ENCODE measurements at regions of chr6 and their contacts with region 1.

Region 1: DNA sequence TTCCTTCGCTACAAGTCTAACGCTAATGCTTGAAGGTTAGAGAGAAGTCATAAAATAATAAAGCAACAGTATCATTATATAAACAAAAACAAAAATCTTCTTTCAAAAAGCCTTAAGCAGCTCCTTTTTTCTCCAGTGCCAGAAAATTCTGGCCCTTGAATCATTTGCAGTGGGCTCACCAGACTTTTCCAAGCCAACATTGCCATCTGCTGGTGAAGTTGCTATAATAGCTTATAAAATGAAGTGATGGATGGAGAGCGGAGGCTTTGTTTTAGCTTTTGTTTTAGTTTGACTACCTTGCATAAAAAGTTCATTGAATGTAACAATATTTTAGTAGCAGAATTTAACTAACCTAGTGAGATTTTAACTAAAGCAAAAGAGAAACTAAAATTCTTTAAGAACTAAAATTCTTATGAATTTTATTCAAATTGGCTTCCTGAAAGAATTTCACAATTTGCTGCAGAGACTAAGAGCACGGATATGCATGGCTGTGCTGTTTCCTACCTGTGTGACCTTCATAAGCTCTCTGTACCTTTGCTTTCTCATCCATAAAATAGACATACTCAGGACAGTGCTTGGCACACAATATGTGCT is 44.8 kb upstream of the SLC2A12 start:
- DNase-seq: peak; percentile 65
- ATAC-seq: peak; percentile 73
- H3K4me3 Mint-ChIP-seq: no peak overlapping the region
- H3K27ac Mint-ChIP-seq: no peak overlapping the region
- H3K4me1 Mint-ChIP-seq: peaks cover 6% of the 10 kb centered on the region; the same call in 1 of the 2 replicates
- H3K27me3 Mint-ChIP-seq: no peaks in the 10 kb centered on the region
- CTCF ChIP-seq: peak; percentile 52

Region 2: DNA sequence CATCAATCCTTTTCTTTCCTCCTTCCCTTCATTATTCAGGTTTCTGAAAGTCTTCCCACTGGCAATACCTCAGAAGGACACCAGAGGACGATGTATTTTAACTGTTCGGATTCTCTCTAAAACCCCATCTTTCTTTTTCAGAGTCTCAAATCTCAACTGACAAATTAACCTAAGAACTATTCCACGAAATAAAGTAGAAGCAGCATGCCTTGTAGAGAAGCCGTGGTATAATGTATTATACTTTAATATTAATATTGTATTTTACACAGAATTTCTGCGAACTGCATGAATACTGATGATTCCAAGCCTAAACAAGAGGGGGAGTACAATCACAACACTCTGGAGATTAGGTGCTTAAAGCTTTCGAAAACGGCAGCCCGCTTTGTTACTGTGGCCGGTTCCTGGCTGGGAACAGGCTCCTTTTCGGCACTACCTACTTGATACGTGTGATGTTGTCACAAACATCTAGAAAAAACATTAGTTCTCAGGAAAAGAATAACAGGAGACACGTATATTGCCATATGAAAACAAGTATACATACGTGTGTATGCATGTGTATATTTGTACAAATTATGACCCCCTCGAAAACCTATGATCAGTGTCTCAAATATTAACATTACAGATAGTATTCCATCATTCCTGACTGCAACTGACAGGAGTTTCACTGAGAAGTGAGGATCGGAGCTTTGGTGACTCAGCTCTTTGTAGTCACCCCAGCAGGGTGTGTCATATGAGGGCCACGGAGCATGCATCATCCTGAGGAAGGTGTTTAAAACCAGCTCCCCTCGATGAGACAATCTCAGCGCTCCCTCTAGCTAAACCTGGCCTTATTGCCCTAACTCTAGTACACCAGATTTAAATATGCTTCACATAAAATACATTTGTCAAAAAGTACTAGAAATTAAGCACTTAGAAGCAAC is 528.0 kb before region 1 on chr6:
- CTCF ChIA-PET with region 1: interaction called, 12 read pairs
- POLR2A ChIA-PET with region 1: no interaction called
- DNase-seq: peak; percentile 36
- ATAC-seq: peak; percentile 90
- H3K4me3 Mint-ChIP-seq: peak overlapping the region; percentile 77
- H3K27ac Mint-ChIP-seq: peak overlapping the region; percentile 92
- H3K4me1 Mint-ChIP-seq: peaks cover 7% of the 10 kb centered on the region
- H3K27me3 Mint-ChIP-seq: no peaks in the 10 kb centered on the region
- CTCF ChIP-seq: peak; percentile 78

Region 3: GRCh38 chr6:133916650-133917151 is 180.5 kb before region 1 on chr6:
- CTCF ChIA-PET with region 1: interaction called, 340 read pairs
- POLR2A ChIA-PET with region 1: no interaction called
- DNase-seq: peak; percentile 99
- ATAC-seq: peak; percentile 78
- H3K4me3 Mint-ChIP-seq: peak overlapping the region; percentile 53
- H3K27ac Mint-ChIP-seq: peak overlapping the region; percentile 92
- H3K4me1 Mint-ChIP-seq: peaks cover 27% of the 10 kb centered on the region
- H3K27me3 Mint-ChIP-seq: no peaks in the 10 kb centered on the region
- CTCF ChIP-seq: peak; percentile 92

Region 4: DNA sequence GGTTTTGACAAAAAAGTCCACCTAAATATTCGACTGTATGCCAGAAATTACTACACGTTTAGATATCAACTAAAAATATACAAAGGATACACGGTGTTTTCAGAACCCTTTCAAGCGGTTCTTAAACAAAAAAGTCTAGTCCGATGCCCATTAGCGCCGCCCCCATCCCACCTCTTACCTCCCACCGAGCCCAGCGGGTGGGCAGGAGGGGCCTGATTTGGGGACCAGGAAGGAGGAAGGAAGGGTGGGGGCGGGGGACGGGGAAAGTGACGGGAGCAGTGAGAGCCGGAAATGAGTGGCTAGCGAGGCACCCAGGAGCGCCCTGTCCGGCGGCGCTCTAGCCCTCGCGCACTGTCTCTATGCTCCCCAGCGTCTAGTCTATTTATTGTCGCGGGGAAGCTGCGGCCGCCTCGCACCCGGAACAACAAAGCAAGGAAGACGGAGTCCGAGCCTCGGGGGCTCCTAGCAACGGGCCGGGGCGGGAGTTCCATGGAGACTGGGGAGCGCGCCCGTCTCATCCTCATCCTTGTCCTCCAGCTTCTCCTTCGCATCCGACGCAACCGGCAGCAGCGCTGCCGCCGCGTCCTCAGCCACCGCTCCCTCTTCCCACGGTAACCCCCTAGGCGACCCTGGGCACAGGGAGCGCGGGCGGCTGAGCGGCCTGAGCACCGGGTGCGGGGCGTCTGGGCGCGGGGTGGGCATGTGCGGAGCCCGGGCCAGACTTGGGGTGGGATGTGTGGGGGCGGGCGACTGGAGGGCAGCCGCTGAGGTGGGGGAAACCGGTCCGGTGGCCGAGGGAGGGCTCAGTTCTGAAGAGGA is 144.2 kb before region 1 on chr6 and contains the start of gene TBPL1:
- CTCF ChIA-PET with region 1: interaction called, 14 read pairs
- POLR2A ChIA-PET with region 1: interaction called, 5 read pairs
- DNase-seq: peak; percentile 92
- ATAC-seq: peak; percentile 94
- H3K4me3 Mint-ChIP-seq: peak within 1 kb of the TSS; percentile 96
- H3K27ac Mint-ChIP-seq: peak within 1 kb of the TSS; percentile 66
- H3K4me1 Mint-ChIP-seq: peaks cover 40% of the 10 kb centered on the region
- H3K27me3 Mint-ChIP-seq: peaks cover 11% of the 10 kb centered on the region
- CTCF ChIP-seq: no peak
- total RNA-seq, gene TBPL1: 39.8 to 44.0 TPM (median 42.1 TPM) in 3 replicates

Region 5: GRCh38 chr6:133995296-133995695 is 101.9 kb before region 1 on chr6:
- CTCF ChIA-PET with region 1: interaction called, 14 read pairs
- POLR2A ChIA-PET with region 1: no interaction called
- DNase-seq: no peak
- ATAC-seq: no peak
- H3K4me3 Mint-ChIP-seq: no peak overlapping the region
- H3K27ac Mint-ChIP-seq: no peak overlapping the region
- H3K4me1 Mint-ChIP-seq: peaks cover 14% of the 10 kb centered on the region
- H3K27me3 Mint-ChIP-seq: no peaks in the 10 kb centered on the region
- CTCF ChIP-seq: no peak

Region 6: GRCh38 chr6:134063966-134064445 is 33.2 kb before region 1 on chr6:
- CTCF ChIA-PET with region 1: interaction called, 41 read pairs
- POLR2A ChIA-PET with region 1: no interaction called
- DNase-seq: peak; percentile 36
- ATAC-seq: peak; percentile 51
- H3K4me3 Mint-ChIP-seq: no peak overlapping the region
- H3K27ac Mint-ChIP-seq: peak overlapping the region; percentile 57; the same call in 1 of the 2 replicates
- H3K4me1 Mint-ChIP-seq: peaks cover 37% of the 10 kb centered on the region
- H3K27me3 Mint-ChIP-seq: no peaks in the 10 kb centered on the region
- CTCF ChIP-seq: peak; percentile 19; the same call in 1 of the 2 replicates

Region 7: GRCh38 chr6:134111062-134111677 is 14.0 kb after region 1 on chr6:
- CTCF ChIA-PET with region 1: interaction called, 16 read pairs
- POLR2A ChIA-PET with region 1: no interaction called
- DNase-seq: peak; percentile 34
- ATAC-seq: peak; percentile 73
- H3K4me3 Mint-ChIP-seq: no peak overlapping the region
- H3K27ac Mint-ChIP-seq: no peak overlapping the region
- H3K4me1 Mint-ChIP-seq: no peaks in the 10 kb centered on the region
- H3K27me3 Mint-ChIP-seq: peaks cover 9% of the 10 kb centered on the region; the same call in 1 of the 2 replicates
- CTCF ChIP-seq: peak; percentile 89

Region 8: DNA sequence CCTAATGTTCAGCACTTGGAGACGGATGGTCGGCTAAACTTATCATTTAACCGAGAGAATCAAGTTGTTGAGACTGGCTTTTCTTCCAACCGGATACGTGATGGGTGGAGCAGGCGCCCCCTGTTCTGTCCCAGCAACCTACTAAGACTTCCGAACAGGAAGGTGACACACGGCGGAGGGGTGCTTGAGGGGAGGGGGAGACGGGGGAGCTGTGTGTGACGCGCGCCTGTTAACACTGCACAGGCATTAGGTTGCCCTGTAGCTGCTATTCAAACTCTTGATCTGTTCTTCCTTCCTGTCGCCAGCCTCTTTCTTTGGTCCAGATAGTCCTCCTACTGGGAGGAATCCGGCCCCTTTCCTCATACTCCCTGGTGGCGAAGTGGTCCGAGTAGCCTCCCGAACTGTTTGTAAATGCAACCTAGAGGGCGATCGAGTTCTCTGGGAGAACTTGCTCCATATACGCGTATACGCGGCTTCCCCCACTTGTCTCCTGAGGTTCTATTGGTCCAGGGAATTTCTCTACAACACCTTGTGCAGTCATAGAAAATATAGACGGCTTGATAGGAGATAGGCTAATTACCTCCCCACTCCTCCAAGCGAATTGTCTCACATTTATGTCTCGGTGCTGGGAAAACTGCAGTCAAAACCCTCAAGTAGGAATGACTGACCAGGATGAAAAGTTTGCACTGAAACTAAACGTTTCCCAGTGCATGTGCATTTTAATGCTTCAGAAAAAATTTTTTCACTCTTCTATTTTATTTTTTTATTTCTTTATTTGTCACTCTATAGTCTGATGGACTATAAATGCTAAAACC is 81.2 kb after region 1 on chr6:
- CTCF ChIA-PET with region 1: no interaction called
- POLR2A ChIA-PET with region 1: no interaction called
- DNase-seq: peak; percentile 79
- ATAC-seq: peak; percentile 70
- H3K4me3 Mint-ChIP-seq: peak overlapping the region; percentile 85
- H3K27ac Mint-ChIP-seq: peak overlapping the region; percentile 60
- H3K4me1 Mint-ChIP-seq: peaks cover 54% of the 10 kb centered on the region
- H3K27me3 Mint-ChIP-seq: peaks cover 21% of the 10 kb centered on the region
- CTCF ChIP-seq: no peak

Region 9: GRCh38 chr6:134347916-134348805 is 250.9 kb after region 1 on chr6:
- CTCF ChIA-PET with region 1: no interaction called
- POLR2A ChIA-PET with region 1: no interaction called
- DNase-seq: no peak
- ATAC-seq: no peak
- H3K4me3 Mint-ChIP-seq: no peak overlapping the region
- H3K27ac Mint-ChIP-seq: no peak overlapping the region
- H3K4me1 Mint-ChIP-seq: peaks cover 20% of the 10 kb centered on the region
- H3K27me3 Mint-ChIP-seq: peaks cover 3% of the 10 kb centered on the region; the same call in 1 of the 2 replicates
- CTCF ChIP-seq: no peak

Measured in WTC11 (cell line).